Activated CD4-positive, alpha-beta T cell treated with anti-CD3 and anti-CD28 coated beads, Interleukin-2, amount 10 ng/mL, durations not matched to agents 7 days and 5 days (primary cell): ENCODE measurements at regions of chr12 and their contacts with region 1.

Region 1: GRCh38 chr12:9750276-9751203 is 10.2 kb downstream of the CD69 start:
- DNase-seq: peak; percentile 74
- H3K4me3 Mint-ChIP-seq: peak overlapping the region; percentile 58
- H3K27ac Mint-ChIP-seq: peak overlapping the region; percentile 80
- H3K4me1 Mint-ChIP-seq: peaks cover 60% of the 10 kb centered on the region
- H3K27me3 Mint-ChIP-seq: no peaks in the 10 kb centered on the region

Region 2: DNA sequence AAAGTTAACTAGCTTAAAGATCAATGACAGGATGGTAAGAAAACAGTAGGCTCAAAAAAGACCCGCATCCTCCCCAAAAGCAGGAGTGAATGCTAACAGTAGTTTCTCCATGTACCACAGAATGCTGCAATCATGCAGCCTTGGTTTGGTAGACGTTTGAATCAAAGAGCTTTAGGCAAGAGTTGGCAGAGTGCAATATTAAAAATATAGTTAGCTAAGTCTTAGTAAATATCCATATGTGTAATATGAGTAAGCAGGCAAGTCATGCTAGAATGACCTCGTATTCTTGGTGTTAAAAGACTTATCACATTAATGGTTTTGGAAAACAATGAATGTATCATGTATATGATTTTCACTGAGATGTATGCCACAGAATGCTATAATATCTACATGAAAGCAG is 58.0 kb after region 1 on chr12:
- CTCF ChIA-PET with region 1: interaction called, 26 read pairs
- POLR2A ChIA-PET with region 1: no interaction called
- DNase-seq: no peak
- H3K4me3 Mint-ChIP-seq: no peak overlapping the region
- H3K27ac Mint-ChIP-seq: no peak overlapping the region
- H3K4me1 Mint-ChIP-seq: peaks cover 25% of the 10 kb centered on the region
- H3K27me3 Mint-ChIP-seq: peaks cover 27% of the 10 kb centered on the region

Region 3: DNA sequence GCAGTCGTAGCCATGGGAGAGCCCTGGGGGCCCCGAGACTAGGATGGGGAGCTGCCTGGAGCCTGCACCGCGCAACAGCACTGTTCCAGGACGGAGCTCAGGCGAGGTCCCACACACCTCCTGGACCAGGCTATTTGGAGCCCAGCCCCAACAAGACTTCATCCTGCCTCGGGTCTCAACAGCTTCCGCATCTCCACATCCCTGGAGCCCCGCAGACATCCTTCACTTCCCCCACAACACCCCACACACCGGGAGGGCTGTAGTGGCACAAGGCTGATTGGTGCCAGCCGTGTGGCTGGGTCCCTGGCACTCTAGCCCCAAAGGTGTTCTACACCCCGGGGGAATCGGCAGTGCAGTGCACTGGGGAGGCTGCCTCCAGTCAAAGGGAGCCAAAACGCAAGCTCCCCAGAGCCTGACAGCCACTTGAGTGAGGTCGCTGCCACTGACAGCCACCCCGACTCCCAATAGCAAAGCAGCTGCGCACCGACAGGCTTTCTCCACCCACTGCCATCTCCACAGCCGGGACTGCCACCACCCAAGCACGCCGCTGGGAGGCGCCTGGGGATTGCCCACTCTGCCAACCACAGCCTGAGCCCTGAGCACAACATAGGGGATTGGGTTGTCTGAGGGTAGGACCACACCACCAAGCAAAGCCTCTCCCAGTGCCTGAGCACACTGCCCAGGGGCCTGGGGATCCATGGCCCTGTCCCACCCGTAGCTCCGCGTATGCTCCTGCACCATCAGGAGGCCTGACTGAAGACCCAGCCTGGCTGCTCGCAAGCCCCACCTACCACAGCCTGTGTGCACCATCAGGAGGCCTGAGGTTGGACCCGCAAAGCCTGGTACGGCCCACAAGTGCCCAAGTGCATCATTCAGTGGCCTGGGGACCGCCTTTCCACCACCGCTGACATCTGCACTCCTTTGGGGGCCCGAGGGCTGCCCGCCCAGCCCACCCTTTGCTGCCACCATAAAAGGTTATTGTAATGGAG is 63.6 kb after region 1 on chr12:
- CTCF ChIA-PET with region 1: interaction called, 26 read pairs
- POLR2A ChIA-PET with region 1: interaction called, 3 read pairs
- DNase-seq: peak; percentile 95
- H3K4me3 Mint-ChIP-seq: peak overlapping the region; percentile 79
- H3K27ac Mint-ChIP-seq: peak overlapping the region; percentile 89
- H3K4me1 Mint-ChIP-seq: peaks cover 37% of the 10 kb centered on the region
- H3K27me3 Mint-ChIP-seq: peaks cover 8% of the 10 kb centered on the region

Region 4: DNA sequence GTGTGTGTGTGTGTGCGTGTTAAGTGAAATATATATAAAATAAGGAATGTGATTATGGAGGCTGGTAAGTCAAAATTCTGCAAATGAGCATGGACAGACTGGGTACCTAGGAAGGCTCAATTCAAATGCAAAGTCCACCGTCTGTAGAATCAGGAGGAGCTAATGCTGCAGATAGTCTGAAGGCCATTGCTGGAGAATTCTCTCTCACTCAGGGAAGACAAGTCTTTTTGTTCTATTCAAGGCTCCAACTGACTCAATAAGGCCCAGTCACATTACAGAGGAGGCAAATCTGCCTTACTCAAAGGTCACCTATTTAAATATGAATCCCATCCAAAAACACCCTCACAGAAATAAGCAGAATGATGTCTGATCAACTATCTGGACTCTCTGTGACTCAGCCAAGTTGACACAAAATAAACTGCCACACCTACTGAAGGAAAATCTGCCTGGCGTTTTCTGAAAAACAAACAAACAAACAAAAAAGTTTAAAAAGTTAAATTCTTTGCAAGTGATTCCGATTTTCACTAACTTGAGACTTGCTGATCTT is 130.1 kb after region 1 on chr12:
- CTCF ChIA-PET with region 1: no interaction called
- POLR2A ChIA-PET with region 1: no interaction called
- DNase-seq: no peak
- H3K4me3 Mint-ChIP-seq: no peak overlapping the region
- H3K27ac Mint-ChIP-seq: no peak overlapping the region
- H3K4me1 Mint-ChIP-seq: peaks cover 17% of the 10 kb centered on the region
- H3K27me3 Mint-ChIP-seq: no peaks in the 10 kb centered on the region